ENCODE measurements at regions of chr1 and their contacts with region 1.

Region 1: DNA sequence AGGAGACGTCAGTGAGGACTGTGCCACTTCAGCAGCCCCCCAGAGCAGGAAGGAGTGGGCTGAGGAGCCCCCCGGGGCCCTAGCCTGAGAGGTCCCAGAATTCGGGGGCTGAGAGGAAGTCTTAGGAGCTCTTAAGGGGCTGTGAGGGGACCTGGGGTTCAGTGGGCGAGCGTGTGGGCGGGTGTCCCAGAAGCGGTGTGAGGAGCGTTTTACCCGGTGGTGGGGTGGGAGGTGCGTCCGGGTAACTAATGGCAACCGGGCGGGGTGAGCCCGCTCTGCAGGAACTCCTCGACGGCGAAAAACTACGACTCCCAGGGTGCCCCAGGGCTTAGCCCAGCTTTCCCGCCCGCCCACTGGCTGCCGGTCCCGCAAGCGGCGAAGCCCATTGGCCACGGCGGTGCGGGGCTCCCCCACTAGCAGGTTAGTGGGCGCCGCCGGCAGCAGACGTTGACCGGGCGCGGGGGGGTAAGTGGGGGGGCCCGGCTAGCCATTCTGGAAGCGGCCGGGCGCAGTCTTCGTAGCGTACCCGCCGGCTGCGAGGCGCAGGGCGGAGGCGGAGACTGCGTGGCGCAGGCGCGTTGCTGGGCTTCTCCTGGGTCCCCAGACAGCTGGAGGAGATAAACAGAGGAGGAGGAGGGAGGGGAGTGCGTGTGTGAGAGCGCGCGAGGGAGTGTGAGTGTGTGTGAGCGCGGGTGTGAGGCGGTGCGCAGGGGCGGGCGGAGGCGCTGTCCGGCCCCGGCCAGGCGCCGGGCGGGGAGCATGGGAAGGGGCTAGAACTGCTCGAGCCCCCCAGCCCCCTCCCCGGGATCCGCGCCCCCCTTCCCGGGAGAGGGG is at the start of gene WDTC1:
- DNase-seq: peak; percentile 98
- H3K4me3 Mint-ChIP-seq: peak within 1 kb of the TSS; percentile 99
- H3K27ac Mint-ChIP-seq: peak within 1 kb of the TSS; percentile 90
- H3K4me1 Mint-ChIP-seq: peaks cover 29% of the 10 kb centered on the region
- H3K27me3 Mint-ChIP-seq: no peaks in the 10 kb centered on the region
- total RNA-seq, gene WDTC1: 22.6 to 22.9 TPM

Region 2: GRCh38 chr1:27154991-27155781 is 79.1 kb before region 1 on chr1 and contains the start of gene SLC9A1:
- CTCF ChIA-PET with region 1: no interaction called
- intact Hi-C with region 1: loop called (anchors 1 kb)
- DNase-seq: peak; percentile 91
- H3K4me3 Mint-ChIP-seq: peak within 1 kb of the TSS; percentile 89
- H3K27ac Mint-ChIP-seq: peak within 1 kb of the TSS; percentile 98
- H3K4me1 Mint-ChIP-seq: peaks cover 47% of the 10 kb centered on the region
- H3K27me3 Mint-ChIP-seq: no peaks in the 10 kb centered on the region
- total RNA-seq, gene SLC9A1: 15.4 to 16.5 TPM

Region 3: DNA sequence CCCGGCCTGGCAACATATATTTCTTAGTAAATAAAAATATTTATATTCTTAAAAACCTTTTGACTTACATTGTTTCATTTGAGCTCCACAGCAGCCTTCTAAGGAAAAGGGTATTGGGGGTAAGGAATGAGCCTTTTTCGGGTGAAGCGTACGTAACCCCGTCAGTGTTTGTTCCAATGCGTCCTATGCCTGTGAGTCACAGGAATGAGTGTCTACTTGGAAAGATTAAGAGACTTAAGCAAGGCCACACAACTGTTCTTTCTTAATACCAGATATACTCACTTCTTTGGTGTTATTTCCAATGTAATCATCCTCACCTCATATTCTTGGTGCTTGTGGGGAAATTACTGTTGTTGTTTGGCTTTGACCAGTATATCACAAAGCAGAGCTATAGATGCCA is 22.9 kb after region 1 on chr1:
- CTCF ChIA-PET with region 1: no interaction called
- intact Hi-C with region 1: loop called (anchors 1 kb)
- DNase-seq: no peak
- H3K4me3 Mint-ChIP-seq: no peak overlapping the region
- H3K27ac Mint-ChIP-seq: no peak overlapping the region
- H3K4me1 Mint-ChIP-seq: peaks cover 56% of the 10 kb centered on the region
- H3K27me3 Mint-ChIP-seq: no peaks in the 10 kb centered on the region

Region 4: DNA sequence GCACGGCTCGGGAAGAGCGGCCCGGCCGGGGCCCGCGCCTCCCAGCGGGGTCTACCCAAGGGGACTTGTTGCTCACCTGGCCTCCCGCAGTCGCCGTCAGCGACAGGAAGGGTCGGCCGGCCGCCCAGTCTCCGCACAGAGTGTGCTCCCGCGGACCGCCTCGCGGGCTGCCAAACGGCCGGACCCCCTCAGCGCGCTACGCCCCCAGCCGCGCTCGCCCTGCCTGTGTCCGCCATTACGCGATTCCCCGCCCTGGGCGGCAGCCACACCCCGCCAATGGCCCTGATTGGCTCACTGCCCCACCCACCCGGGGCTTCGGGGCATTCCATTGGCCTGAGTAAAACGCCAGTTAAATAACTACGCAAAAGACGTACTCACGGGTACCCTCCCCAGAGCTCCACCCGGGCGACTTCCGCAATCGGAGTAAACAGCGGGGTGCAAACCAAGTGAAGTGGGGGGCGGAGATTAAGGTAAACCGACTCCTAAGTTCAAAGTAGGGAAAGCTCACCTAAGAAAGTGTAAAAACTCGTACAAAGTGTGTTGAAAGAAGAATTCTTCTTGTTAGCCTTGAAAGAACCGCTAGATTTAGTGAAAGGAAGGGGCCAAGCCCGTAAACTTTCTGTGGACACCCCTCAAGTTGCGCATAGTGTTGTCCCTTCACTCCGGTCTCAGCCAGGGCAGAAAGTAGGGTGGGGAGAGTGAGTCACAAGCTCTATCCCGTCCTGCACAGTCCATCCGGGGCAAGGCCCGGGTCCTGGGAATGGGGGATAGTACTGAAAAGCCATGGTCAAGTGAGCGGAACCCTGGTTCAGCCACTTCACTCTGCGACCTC is 255.9 kb after region 1 on chr1 and contains the start of gene WASF2:
- CTCF ChIA-PET with region 1: no interaction called
- intact Hi-C with region 1: loop called (anchors 1 kb)
- DNase-seq: peak; percentile 98
- H3K4me3 Mint-ChIP-seq: peak within 1 kb of the TSS; percentile 89
- H3K27ac Mint-ChIP-seq: peak within 1 kb of the TSS; percentile 99
- H3K4me1 Mint-ChIP-seq: peaks cover 30% of the 10 kb centered on the region
- H3K27me3 Mint-ChIP-seq: no peaks in the 10 kb centered on the region
- total RNA-seq, gene WASF2: 105 to 106 TPM